Calu3 (cell line): ENCODE measurements at regions of chr3 and their contacts with region 1.

Region 1: DNA sequence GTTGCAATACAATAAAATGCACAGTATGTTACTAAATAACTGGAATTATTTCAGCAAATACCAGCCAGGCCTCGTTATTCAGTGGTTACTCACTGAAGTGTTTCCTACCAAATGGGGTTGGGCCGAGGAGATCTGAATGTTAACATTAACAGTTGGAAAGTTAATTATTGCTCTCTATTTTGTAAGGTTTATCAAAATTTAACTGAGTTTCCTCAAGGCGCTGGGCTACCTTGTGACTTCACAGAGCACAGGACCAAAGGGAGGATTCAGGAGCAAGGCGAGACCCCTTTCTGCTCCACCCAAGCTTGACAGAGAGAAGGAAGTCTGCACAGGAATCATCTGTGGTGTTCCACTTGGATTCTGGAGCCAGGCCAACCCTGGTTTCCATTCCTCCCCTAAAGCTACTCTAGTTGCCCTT is 21.6 kb downstream of the ADAMTS9 start:
- DNase-seq: peak; percentile 67
- H3K4me3 Mint-ChIP-seq: no peak overlapping the region
- H3K27ac Mint-ChIP-seq: peak overlapping the region; percentile 92
- H3K4me1 Mint-ChIP-seq: peaks cover 63% of the 10 kb centered on the region
- H3K27me3 Mint-ChIP-seq: no peaks in the 10 kb centered on the region
- CTCF ChIP-seq: no peak

Region 2: GRCh38 chr3:64187065-64187959 is 478.9 kb before region 1 on chr3:
- CTCF ChIA-PET with region 1: no interaction called
- intact Hi-C with region 1: no loop called
- DNase-seq: peak; percentile 71
- H3K4me3 Mint-ChIP-seq: no peak overlapping the region
- H3K27ac Mint-ChIP-seq: peak overlapping the region; percentile 73
- H3K4me1 Mint-ChIP-seq: peaks cover 46% of the 10 kb centered on the region
- H3K27me3 Mint-ChIP-seq: no peaks in the 10 kb centered on the region
- CTCF ChIP-seq: no peak

Region 3: GRCh38 chr3:64548200-64548889 is 117.8 kb before region 1 on chr3:
- CTCF ChIA-PET with region 1: no interaction called
- intact Hi-C with region 1: no loop called
- DNase-seq: no peak
- H3K4me3 Mint-ChIP-seq: no peak overlapping the region
- H3K27ac Mint-ChIP-seq: no peak overlapping the region
- H3K4me1 Mint-ChIP-seq: no peaks in the 10 kb centered on the region
- H3K27me3 Mint-ChIP-seq: no peaks in the 10 kb centered on the region
- CTCF ChIP-seq: no peak

Region 4: DNA sequence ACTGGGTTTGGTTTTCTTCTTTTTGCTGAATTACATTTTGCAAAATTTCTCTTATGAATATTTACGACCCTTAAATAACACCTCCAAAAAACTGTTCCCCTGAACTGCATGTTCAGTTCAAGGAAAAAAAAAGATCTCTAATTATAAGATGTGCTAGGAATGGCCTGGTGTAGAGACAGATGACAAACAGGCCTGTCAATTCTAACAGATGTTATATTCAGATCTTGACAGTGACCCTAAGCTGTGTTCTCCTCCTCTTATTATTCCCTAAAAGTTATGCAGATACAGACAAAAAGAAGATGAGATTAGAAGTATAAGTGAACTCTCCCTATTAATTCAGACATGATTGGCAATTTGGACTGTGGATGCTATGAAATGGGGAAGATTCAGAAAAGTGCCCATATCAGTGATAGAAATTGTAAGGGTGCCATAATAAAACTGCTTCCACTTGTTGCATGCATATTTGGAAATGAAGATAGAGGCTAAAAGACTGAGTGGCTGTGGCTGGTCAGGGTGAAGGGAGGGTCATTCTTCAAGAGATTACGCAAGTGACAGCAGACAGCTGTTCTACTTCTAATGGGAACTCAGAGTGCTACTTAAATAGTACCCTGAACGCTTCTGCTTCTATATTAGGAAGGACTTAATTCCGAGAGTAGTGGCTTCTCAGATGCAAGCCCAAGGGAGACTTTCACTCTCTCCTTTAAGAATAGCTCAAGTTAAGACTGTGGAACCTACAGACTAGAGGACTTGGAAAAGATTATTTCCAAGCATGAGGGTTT is 53.9 kb before region 1 on chr3:
- CTCF ChIA-PET with region 1: no interaction called
- intact Hi-C with region 1: loop called (anchors 5 kb)
- DNase-seq: no peak
- H3K4me3 Mint-ChIP-seq: no peak overlapping the region
- H3K27ac Mint-ChIP-seq: peak overlapping the region; percentile 63
- H3K4me1 Mint-ChIP-seq: peaks cover 37% of the 10 kb centered on the region
- H3K27me3 Mint-ChIP-seq: no peaks in the 10 kb centered on the region
- CTCF ChIP-seq: no peak

Region 5: GRCh38 chr3:64685800-64686445 is 19.7 kb after region 1 on chr3:
- CTCF ChIA-PET with region 1: interaction called, 3 read pairs
- intact Hi-C with region 1: loop called (anchors 2 kb)
- DNase-seq: peak; percentile 95
- H3K4me3 Mint-ChIP-seq: peak overlapping the region; percentile 81
- H3K27ac Mint-ChIP-seq: peak overlapping the region; percentile 97
- H3K4me1 Mint-ChIP-seq: peaks cover 21% of the 10 kb centered on the region
- H3K27me3 Mint-ChIP-seq: no peaks in the 10 kb centered on the region
- CTCF ChIP-seq: no peak